Endothelial cell of umbilical vein (primary cell): ENCODE measurements at regions of chr3 and their contacts with region 1.

Region 1: DNA sequence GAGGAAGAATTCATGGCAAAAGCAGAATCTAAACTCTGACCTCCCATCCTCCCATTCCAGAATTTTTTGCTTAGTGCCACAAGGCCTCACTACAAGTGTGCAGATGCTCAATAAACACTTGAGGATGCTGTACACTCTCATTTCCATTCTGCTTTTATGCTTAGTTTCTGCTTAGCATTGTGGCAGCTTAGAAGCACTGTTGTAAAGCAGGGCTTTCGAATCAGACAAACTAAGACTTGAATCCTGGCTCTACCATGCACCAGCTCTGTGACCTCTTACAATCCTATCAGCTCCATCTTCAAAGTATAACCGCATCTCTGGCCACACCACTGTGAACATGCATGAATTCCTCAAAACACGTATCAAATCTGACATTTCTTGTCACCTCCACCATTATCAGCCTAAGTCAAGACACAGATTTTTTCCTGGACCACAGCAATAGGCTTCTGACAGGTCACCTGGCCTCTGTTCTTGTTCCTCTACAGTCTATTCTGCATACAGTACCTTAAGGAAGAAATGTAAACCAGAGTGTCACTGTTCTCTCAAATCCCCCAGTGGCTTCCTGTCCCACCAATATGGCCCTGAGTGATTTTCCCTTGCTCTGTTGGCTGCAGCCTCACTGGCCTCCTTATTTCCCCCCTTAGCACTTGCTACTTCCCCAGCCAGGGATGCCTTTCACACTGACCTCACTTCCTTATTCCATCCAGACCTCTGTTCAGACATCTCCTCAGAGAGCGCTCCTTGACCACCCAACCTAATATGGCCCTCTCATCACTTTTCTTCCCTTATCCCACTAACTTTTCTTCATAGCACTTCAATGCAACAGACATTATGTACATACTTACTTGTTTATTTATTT is 8.1 kb upstream of the PHC3 start:
- DNase-seq: no peak
- H3K4me3 ChIP-seq: no peak overlapping the region
- H3K27ac ChIP-seq: no peak overlapping the region
- H3K4me1 ChIP-seq: no peaks in the 10 kb centered on the region
- H3K27me3 ChIP-seq: peaks cover 0 to 6% of the 10 kb centered on the region in 2 experiments
- CTCF ChIP-seq: no peak
- POLR2A ChIP-seq: no peak

Region 2: DNA sequence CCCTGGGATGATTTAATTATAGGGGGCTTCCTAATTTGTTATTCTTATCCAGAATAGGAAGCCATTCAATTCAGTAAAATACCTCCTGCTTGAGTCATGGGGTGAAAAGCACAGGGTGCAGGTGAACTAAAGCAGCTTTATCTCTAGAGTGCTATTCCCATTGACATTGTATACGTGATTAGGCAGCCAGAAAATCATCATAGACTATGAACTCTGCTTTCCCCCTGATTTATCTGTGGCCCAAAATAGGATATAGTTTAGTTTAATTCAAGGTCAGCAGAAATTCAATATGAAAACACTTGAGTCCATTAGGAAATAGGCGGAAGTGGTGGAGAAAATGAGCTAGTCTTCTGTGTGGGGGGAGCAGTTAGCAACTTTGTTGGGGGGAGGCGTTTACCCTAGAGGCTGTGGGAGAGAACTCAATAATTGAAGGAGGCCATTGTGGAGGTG is 14.4 kb after region 1 on chr3:
- CTCF ChIA-PET with region 1: interaction called, 10 read pairs
- POLR2A ChIA-PET with region 1: no interaction called
- dilution Hi-C with region 1: no loop called
- intact Hi-C with region 1: no loop called
- DNase-seq: no peak
- H3K4me3 ChIP-seq: no peak overlapping the region
- H3K27ac ChIP-seq: no peak overlapping the region
- H3K4me1 ChIP-seq: no peaks in the 10 kb centered on the region
- H3K27me3 ChIP-seq: peaks cover 7 to 9% of the 10 kb centered on the region in 2 experiments
- CTCF ChIP-seq: no peak
- POLR2A ChIP-seq: no peak

Region 3: DNA sequence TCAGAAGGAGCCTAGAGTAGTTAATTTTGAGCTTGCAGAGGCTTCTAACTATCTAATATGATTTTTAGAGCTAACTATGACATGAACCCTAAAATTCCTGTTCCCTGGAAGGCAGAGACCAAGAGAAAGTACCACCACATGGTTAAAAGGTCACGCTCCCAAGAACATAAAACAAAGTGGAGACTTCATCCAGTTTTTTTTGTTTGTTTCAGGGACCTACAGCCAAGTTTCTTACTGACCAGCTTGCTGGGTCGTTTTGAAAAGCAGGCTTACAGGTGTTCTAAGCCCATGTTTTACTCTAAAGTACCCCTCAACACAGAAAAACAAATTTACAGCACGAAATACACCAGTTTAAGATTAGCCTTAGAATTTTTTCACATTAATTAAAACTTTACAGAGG is 128.3 kb after region 1 on chr3:
- CTCF ChIA-PET with region 1: no interaction called
- POLR2A ChIA-PET with region 1: no interaction called
- dilution Hi-C with region 1: no loop called
- intact Hi-C with region 1: no loop called
- DNase-seq: no peak
- H3K4me3 ChIP-seq: no peak overlapping the region
- H3K27ac ChIP-seq: no peak overlapping the region
- H3K4me1 ChIP-seq: peaks cover 14% of the 10 kb centered on the region
- H3K27me3 ChIP-seq: no peaks in the 10 kb centered on the region
- CTCF ChIP-seq: no peak
- POLR2A ChIP-seq: no peak

Region 4: DNA sequence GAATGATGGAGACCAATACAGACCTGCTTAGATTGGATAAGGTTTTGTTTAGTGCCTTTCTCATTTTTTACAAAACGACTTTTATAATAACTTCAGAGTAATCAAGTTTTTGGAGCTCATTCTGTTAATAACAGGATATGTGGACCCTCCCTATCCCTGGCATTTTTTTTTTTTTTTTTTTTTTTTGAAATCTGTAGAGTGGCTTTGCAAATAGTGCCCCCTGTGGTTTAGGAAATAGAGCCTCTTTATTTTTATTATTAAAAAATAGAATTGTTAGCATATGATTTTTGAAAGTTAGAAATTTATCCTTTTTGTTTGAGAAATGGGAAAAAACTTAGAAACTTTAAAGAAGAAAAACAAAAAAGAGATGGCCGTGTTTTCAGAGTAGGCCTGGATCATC is 179.3 kb after region 1 on chr3:
- CTCF ChIA-PET with region 1: interaction called, 3 read pairs
- POLR2A ChIA-PET with region 1: no interaction called
- dilution Hi-C with region 1: no loop called
- intact Hi-C with region 1: loop called (anchors 1 kb)
- DNase-seq: no peak
- H3K4me3 ChIP-seq: no peak overlapping the region
- H3K27ac ChIP-seq: no peak overlapping the region
- H3K4me1 ChIP-seq: peaks cover 44% of the 10 kb centered on the region
- H3K27me3 ChIP-seq: no peaks in the 10 kb centered on the region
- CTCF ChIP-seq: peak; percentile 13 to 16
- POLR2A ChIP-seq: no peak